Activated B cell treated with CpG ODN at 0.5 μM for 24 hours (primary cell): ENCODE measurements at regions of chr11 and their contacts with region 1.

Region 1: GRCh38 chr11:118895142-118896039 is 11.7 kb downstream of the CXCR5 start:
- DNase-seq: peak; percentile 62
- ATAC-seq: peak; percentile 70
- H3K4me3 Mint-ChIP-seq: peak overlapping the region; percentile 80
- H3K27ac Mint-ChIP-seq: peak overlapping the region; percentile 98
- H3K4me1 Mint-ChIP-seq: peaks cover 85% of the 10 kb centered on the region
- H3K27me3 Mint-ChIP-seq: no peaks in the 10 kb centered on the region
- CTCF ChIP-seq: no peak

Region 2: DNA sequence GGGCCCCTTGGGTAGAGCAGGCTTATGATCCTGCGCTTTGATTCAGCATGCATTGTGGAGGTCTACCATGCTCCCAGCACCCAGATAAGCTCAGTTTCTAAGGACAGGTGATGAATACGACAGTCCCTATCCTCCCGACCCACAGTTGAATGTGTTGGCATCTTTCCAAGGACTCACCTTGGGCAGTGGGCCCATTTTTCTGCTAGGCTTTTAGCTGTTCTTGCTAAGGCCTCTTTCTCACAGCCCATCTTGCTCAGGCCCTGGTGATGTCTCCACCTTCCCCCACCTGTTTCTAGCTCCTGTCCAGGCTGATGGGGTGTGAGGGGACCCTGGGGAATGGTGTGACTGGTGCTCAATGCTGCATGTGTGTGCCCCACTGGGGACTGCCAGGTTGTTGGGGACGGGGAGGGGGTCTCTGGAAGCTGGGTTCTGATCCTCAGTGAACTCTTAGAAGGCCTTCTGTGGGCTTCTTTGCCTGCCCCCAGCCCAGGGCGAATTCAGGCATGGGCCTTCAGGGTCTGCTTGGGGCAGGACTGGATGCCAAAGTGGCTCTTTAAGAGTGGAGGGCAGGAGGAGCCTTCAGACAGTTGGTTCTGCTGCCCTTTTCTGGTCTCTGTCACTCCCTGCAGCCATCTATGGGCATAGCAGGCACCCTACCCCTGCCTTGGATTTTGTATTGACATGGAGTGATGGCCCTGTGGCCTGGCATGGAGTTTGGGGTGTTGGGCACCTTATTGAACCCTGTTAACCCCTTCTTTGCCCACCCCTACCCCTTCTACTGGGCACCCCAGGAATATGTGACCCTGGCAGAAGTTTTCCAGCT is 254.8 kb before region 1 on chr11:
- CTCF ChIA-PET with region 1: no interaction called
- POLR2A ChIA-PET with region 1: no interaction called
- intact Hi-C with region 1: no loop called
- DNase-seq: no peak
- ATAC-seq: no peak
- H3K4me3 Mint-ChIP-seq: no peak overlapping the region
- H3K27ac Mint-ChIP-seq: no peak overlapping the region
- H3K4me1 Mint-ChIP-seq: no peaks in the 10 kb centered on the region
- H3K27me3 Mint-ChIP-seq: peaks cover 5% of the 10 kb centered on the region
- CTCF ChIP-seq: no peak

Region 3: GRCh38 chr11:118785362-118785761 is 110.0 kb before region 1 on chr11:
- CTCF ChIA-PET with region 1: no interaction called
- POLR2A ChIA-PET with region 1: interaction called, 213 read pairs
- intact Hi-C with region 1: loop called (anchors 1 kb)
- DNase-seq: no peak
- ATAC-seq: no peak
- H3K4me3 Mint-ChIP-seq: peak overlapping the region; percentile 60
- H3K27ac Mint-ChIP-seq: peak overlapping the region; percentile 63
- H3K4me1 Mint-ChIP-seq: peaks cover 67% of the 10 kb centered on the region
- H3K27me3 Mint-ChIP-seq: no peaks in the 10 kb centered on the region
- CTCF ChIP-seq: no peak

Region 4: GRCh38 chr11:118878163-118878563 is 17.2 kb before region 1 on chr11:
- CTCF ChIA-PET with region 1: interaction called, 12 read pairs
- POLR2A ChIA-PET with region 1: interaction called, 22 read pairs
- intact Hi-C with region 1: no loop called
- DNase-seq: no peak
- ATAC-seq: no peak
- H3K4me3 Mint-ChIP-seq: no peak overlapping the region
- H3K27ac Mint-ChIP-seq: peak overlapping the region; percentile 89
- H3K4me1 Mint-ChIP-seq: peaks cover 89% of the 10 kb centered on the region
- H3K27me3 Mint-ChIP-seq: no peaks in the 10 kb centered on the region
- CTCF ChIP-seq: no peak

Region 5: GRCh38 chr11:118907051-118908042 is 12.0 kb after region 1 on chr11:
- CTCF ChIA-PET with region 1: interaction called, 3 read pairs
- POLR2A ChIA-PET with region 1: interaction called, 15 read pairs
- intact Hi-C with region 1: no loop called
- DNase-seq: peak; percentile 77
- ATAC-seq: peak; percentile 85
- H3K4me3 Mint-ChIP-seq: no peak overlapping the region
- H3K27ac Mint-ChIP-seq: peak overlapping the region; percentile 53
- H3K4me1 Mint-ChIP-seq: peaks cover 39% of the 10 kb centered on the region
- H3K27me3 Mint-ChIP-seq: no peaks in the 10 kb centered on the region
- CTCF ChIP-seq: peak; percentile 64